ENCODE measurements at regions of chr16 and their contacts with region 1.

Region 1: DNA sequence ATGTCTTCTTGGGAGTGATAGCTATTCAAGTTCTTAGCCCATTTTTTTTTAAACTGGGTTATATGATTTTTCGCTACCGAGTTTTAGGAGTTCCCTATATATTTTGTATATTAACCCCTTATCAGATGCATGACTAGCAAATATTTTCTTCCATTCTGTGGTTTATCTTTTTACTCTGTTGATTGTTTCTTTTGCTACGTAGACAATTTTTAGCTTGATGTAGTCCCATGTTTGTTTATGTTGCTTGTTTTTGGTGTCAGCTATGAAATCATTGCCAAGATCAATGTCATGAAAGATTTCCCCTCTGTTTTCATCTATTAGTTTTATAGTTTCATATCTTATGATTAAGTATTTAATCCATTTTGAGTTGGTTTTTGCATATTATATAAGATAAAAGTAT is 480.5 kb downstream of the CDH11 start:
- DNase-seq: no peak
- ATAC-seq: no peak
- H3K4me3 ChIP-seq: no peak overlapping the region
- H3K27ac ChIP-seq: no peak overlapping the region
- H3K4me1 ChIP-seq: no peaks in the 10 kb centered on the region
- H3K27me3 ChIP-seq: no peaks in the 10 kb centered on the region
- CTCF ChIP-seq: no peak

Region 2: GRCh38 chr16:64297863-64298600 is 343.3 kb before region 1 on chr16:
- intact Hi-C with region 1: no loop called
- DNase-seq: no peak
- ATAC-seq: peak in 1 of 8 donors; percentile 42
- H3K4me3 ChIP-seq: no peak overlapping the region
- H3K27ac ChIP-seq: no peak overlapping the region
- H3K4me1 ChIP-seq: peaks cover 0 to 15% (median 5%) of the 10 kb centered on the region in 9 donors
- H3K27me3 ChIP-seq: no peaks in the 10 kb centered on the region
- CTCF ChIP-seq: no peak

Region 3: DNA sequence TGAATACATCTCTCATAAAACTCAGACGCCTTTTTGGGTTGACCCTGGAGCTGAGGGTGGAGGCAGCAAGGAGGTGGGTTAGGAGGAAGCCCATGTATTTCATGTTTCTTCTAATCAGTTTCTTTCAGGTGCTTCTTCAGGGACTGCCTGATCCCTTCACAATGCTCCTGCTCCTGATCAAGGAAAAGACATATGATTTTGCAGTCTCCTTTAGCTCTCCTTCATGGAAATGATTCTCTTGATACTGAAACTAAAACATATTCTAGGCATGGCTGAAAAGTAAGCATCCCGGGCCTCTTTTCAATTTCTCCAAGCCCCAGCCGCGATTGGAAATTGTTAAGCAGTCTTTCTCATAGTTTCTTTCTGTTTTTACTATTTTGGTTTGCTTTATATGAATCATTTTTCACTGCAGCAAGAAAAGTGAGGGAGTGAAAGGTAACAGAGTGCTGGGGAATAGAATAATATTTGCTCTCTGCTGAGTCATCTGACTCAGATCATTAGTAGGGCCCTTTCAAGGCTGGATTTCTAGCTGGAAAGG is 250.2 kb before region 1 on chr16:
- intact Hi-C with region 1: loop called in 1 of 10 experiments (anchors 5 kb)
- DNase-seq: no peak
- ATAC-seq: peak in 1 of 8 donors; percentile 46
- H3K4me3 ChIP-seq: peak overlapping the region in 5 of 10 donors; percentile 3 to 21 (median 3)
- H3K27ac ChIP-seq: peak overlapping the region in 7 of 10 donors; percentile 0 to 67 (median 53)
- H3K4me1 ChIP-seq: peaks cover 0 to 14% (median 5%) of the 10 kb centered on the region in 9 donors
- H3K27me3 ChIP-seq: no peaks in the 10 kb centered on the region
- CTCF ChIP-seq: no peak

Region 4: DNA sequence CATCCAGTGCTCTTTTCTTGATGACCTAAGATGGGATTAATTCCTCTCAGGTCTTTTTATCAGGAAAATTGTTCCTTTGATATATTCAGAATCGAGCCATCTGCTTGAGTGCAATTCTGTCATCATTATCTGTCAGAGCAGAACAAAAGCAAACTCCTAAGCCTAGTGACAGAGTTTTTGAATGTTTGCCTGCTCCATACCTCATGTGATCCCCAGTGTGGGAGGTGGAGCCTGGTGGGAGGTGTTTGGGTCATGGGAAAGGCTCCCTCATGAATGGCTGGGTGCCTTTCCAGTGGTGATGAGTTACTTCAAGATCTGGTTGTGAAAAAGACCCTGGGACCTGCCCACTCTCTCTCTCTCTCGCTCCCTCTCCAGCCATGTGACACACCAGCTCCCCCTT is 147.6 kb before region 1 on chr16:
- intact Hi-C with region 1: no loop called
- DNase-seq: no peak
- ATAC-seq: no peak
- H3K4me3 ChIP-seq: no peak overlapping the region
- H3K27ac ChIP-seq: no peak overlapping the region
- H3K4me1 ChIP-seq: no peaks in the 10 kb centered on the region
- H3K27me3 ChIP-seq: no peaks in the 10 kb centered on the region
- CTCF ChIP-seq: no peak

Region 5: DNA sequence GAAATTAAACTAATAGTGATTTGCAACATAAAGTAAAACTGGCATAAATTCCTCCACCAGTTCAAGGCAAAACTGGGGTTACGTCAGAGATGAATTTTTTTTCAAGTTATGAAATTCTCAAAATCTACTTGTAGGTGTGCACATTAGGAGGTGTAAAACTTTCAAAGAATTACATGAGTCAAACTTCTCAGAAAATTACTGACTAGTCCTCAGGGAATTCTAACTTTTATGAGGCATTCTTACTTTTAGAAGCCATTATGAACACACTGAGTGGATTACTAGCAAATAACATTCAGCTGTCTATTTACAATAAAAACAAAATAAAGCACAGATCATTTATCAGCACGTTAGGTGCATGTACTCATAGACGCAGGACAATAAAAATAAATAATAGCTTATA is 131.8 kb after region 1 on chr16:
- intact Hi-C with region 1: no loop called
- DNase-seq: no peak
- ATAC-seq: no peak
- H3K4me3 ChIP-seq: no peak overlapping the region
- H3K27ac ChIP-seq: no peak overlapping the region
- H3K4me1 ChIP-seq: no peaks in the 10 kb centered on the region
- H3K27me3 ChIP-seq: no peaks in the 10 kb centered on the region
- CTCF ChIP-seq: no peak